ENCODE measurements at regions of chr9 and their contacts with region 1.

Region 1: DNA sequence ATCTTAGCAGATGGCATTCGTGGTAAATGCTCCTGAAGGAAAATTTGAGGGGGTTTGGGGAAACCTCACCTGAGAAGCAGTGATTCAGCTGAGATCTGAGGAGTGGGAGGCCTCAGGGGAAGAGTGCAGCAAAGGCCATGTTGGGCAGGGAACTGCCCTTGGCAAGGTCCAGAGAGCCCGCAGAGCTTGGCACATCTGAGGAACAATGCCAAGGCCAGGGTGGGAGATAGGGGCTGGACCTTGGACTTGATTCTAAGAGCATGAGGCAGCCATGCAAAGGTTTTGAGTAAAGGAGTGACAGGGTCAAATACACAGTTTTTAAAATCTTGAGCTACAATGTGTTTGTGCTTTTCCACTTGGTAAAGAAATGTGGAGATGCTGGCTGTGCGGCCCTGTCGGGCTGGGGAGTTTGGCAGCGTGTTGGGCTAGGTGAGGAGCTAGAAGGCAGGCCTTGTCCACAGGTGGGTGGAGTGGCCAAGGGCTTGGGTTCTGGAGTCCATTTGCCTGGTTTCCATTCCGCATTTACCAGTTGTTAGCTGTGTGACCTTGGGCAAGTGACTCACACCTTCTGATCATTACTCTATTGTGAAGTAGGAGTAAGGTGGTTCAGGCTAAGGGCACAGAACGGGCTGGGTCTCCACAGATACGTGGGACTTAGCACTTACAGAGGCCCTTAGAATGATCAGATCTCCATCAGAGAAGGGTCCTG is 6.1 kb downstream of the TBC1D13 start:
- DNase-seq: no peak
- ATAC-seq: no peak
- H3K4me3 ChIP-seq: no peak overlapping the region
- H3K4me3 Mint-ChIP-seq: no peak overlapping the region
- H3K27ac ChIP-seq: no peak overlapping the region
- H3K27ac Mint-ChIP-seq: no peak overlapping the region
- H3K4me1 ChIP-seq: peaks cover 7% of the 10 kb centered on the region
- H3K4me1 Mint-ChIP-seq: peaks cover 18% of the 10 kb centered on the region
- H3K27me3 ChIP-seq: no peaks in the 10 kb centered on the region
- H3K27me3 Mint-ChIP-seq: no peaks in the 10 kb centered on the region
- CTCF ChIP-seq: no peak

Region 2: GRCh38 chr9:128742401-128742800 is 50.7 kb before region 1 on chr9:
- CTCF ChIA-PET with region 1: no interaction called
- POLR2A ChIA-PET with region 1: no interaction called
- intact Hi-C with region 1: no loop called
- DNase-seq: no peak
- ATAC-seq: no peak
- H3K4me3 ChIP-seq: no peak overlapping the region
- H3K4me3 Mint-ChIP-seq: no peak overlapping the region
- H3K27ac ChIP-seq: no peak overlapping the region
- H3K27ac Mint-ChIP-seq: no peak overlapping the region
- H3K4me1 ChIP-seq: no peaks in the 10 kb centered on the region
- H3K4me1 Mint-ChIP-seq: no peaks in the 10 kb centered on the region
- H3K27me3 ChIP-seq: no peaks in the 10 kb centered on the region
- H3K27me3 Mint-ChIP-seq: no peaks in the 10 kb centered on the region
- CTCF ChIP-seq: no peak

Region 3: DNA sequence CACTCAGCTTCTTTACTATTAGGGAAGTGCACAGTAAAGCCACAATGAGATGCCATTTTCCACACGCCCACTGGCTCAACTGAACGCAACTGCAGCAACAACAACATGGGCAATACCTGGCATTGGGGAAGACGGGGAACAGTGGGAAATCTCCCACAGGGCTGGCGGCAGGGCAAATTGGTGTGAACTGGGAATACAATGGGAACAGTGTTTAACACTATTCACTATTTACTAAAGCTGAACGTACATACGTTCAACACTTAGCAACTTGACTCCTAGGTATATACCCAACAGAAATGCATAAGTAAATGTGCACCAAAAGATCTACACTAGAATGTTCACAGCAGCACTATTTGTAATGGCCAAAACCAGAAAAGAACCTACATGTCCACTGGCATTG is 35.5 kb before region 1 on chr9:
- CTCF ChIA-PET with region 1: no interaction called
- POLR2A ChIA-PET with region 1: no interaction called
- intact Hi-C with region 1: loop called in 1 of 2 experiments (anchors 5 kb)
- DNase-seq: no peak
- ATAC-seq: no peak
- H3K4me3 ChIP-seq: no peak overlapping the region
- H3K4me3 Mint-ChIP-seq: no peak overlapping the region
- H3K27ac ChIP-seq: no peak overlapping the region
- H3K27ac Mint-ChIP-seq: no peak overlapping the region
- H3K4me1 ChIP-seq: no peaks in the 10 kb centered on the region
- H3K4me1 Mint-ChIP-seq: peaks cover 7% of the 10 kb centered on the region
- H3K27me3 ChIP-seq: no peaks in the 10 kb centered on the region
- H3K27me3 Mint-ChIP-seq: no peaks in the 10 kb centered on the region
- CTCF ChIP-seq: no peak

Region 4: GRCh38 chr9:129131300-129132145 is 338.4 kb after region 1 on chr9:
- CTCF ChIA-PET with region 1: no interaction called
- POLR2A ChIA-PET with region 1: no interaction called
- intact Hi-C with region 1: no loop called
- DNase-seq: peak; percentile 77 to 92 (median 85)
- ATAC-seq: peak; percentile 100
- H3K4me3 ChIP-seq: no peak overlapping the region
- H3K4me3 Mint-ChIP-seq: no peak overlapping the region
- H3K27ac ChIP-seq: peak overlapping the region in 1 of 2 experiments; percentile 1
- H3K27ac Mint-ChIP-seq: peak overlapping the region; percentile 41
- H3K4me1 ChIP-seq: peaks cover 3% of the 10 kb centered on the region
- H3K4me1 Mint-ChIP-seq: peaks cover 5% of the 10 kb centered on the region
- H3K27me3 ChIP-seq: no peaks in the 10 kb centered on the region
- H3K27me3 Mint-ChIP-seq: no peaks in the 10 kb centered on the region
- CTCF ChIP-seq: peak; percentile 96

Measured in CD8-positive, alpha-beta T cell (primary cell).